B cell (primary cell): ENCODE measurements at regions of chr13 and their contacts with region 1.

Region 1: DNA sequence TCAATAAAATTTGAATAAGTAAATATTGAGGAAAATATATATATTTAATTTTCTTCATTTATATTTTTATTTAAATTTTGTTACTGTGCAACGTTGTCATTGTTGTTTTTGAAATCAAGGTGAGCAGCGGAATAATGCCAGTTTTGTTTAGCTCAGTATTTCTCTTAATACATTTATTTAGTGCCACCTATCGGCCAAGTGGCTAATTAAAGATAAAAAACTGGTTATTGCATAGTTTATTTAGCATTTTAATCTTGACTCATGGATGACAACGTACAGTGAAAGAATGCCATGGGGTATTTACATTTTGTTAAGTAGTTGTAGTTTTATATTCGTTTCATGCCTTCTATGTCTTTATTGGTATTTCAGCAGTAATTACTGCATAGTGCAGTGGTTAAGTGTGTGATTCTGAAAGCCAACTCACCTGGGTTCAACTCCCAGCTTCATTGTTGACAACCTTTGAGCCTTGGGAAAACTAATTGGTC is 265.9 kb downstream of the MYO16 start:
- DNase-seq: peak; percentile 23
- ATAC-seq: no peak
- H3K4me3 ChIP-seq: no peak overlapping the region
- H3K4me3 Mint-ChIP-seq: no peak overlapping the region
- H3K27ac ChIP-seq: no peak overlapping the region
- H3K27ac Mint-ChIP-seq: no peak overlapping the region
- H3K4me1 ChIP-seq: no peaks in the 10 kb centered on the region
- H3K4me1 Mint-ChIP-seq: peaks cover 2% of the 10 kb centered on the region
- H3K27me3 ChIP-seq: peaks cover 0 to 4% (median 0%) of the 10 kb centered on the region in 4 experiments
- H3K27me3 Mint-ChIP-seq: peaks cover 11% of the 10 kb centered on the region
- CTCF ChIP-seq: peak; percentile 79

Region 2: GRCh38 chr13:108176685-108177274 is 718.5 kb before region 1 on chr13:
- CTCF ChIA-PET with region 1: interaction called, 3 read pairs
- POLR2A ChIA-PET with region 1: no interaction called
- intact Hi-C with region 1: loop called (anchors 2 kb)
- DNase-seq: peak; percentile 79
- ATAC-seq: peak; percentile 41
- H3K4me3 ChIP-seq: no peak overlapping the region
- H3K4me3 Mint-ChIP-seq: no peak overlapping the region
- H3K27ac ChIP-seq: no peak overlapping the region
- H3K27ac Mint-ChIP-seq: no peak overlapping the region
- H3K4me1 ChIP-seq: no peaks in the 10 kb centered on the region
- H3K4me1 Mint-ChIP-seq: peaks cover 2% of the 10 kb centered on the region
- H3K27me3 ChIP-seq: no peaks in the 10 kb centered on the region
- H3K27me3 Mint-ChIP-seq: no peaks in the 10 kb centered on the region
- CTCF ChIP-seq: peak; percentile 83

Region 3: DNA sequence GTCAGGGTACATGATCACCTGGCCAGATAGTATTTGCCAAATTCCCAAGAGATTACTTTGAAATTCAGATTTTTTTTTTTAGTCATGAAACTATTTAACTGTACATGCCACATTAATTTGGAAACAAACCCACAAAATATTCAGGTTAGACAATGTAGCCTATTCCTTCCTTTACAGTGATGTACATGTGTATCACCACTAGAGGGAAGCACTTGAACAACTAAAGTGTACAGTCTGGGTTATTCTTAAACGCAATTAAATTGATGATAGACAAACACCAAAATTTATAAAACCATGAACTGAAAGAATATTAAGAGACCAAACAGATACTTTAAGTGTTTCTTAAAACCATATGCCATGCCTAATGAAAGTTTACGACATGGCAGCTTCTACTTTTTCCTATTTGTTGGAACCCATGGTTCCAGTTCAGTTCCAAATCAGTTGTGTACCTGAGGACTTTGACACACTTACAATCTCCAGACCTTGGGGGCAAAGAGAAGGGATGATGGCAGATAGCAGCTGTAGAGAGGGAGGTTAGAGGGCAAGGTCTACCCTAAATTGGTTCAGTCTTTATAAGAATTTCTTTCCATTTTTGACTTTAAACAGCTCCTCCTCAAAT is 572.9 kb before region 1 on chr13:
- CTCF ChIA-PET with region 1: interaction called, 7 read pairs
- POLR2A ChIA-PET with region 1: no interaction called
- intact Hi-C with region 1: loop called (anchors 2 kb)
- DNase-seq: peak; percentile 48
- ATAC-seq: peak; percentile 53
- H3K4me3 ChIP-seq: no peak overlapping the region
- H3K4me3 Mint-ChIP-seq: no peak overlapping the region
- H3K27ac ChIP-seq: no peak overlapping the region
- H3K27ac Mint-ChIP-seq: no peak overlapping the region
- H3K4me1 ChIP-seq: peaks cover 12 to 18% of the 10 kb centered on the region in 2 donors
- H3K4me1 Mint-ChIP-seq: peaks cover 18% of the 10 kb centered on the region
- H3K27me3 ChIP-seq: no peaks in the 10 kb centered on the region
- H3K27me3 Mint-ChIP-seq: peaks cover 4% of the 10 kb centered on the region
- CTCF ChIP-seq: peak; percentile 93

Region 4: DNA sequence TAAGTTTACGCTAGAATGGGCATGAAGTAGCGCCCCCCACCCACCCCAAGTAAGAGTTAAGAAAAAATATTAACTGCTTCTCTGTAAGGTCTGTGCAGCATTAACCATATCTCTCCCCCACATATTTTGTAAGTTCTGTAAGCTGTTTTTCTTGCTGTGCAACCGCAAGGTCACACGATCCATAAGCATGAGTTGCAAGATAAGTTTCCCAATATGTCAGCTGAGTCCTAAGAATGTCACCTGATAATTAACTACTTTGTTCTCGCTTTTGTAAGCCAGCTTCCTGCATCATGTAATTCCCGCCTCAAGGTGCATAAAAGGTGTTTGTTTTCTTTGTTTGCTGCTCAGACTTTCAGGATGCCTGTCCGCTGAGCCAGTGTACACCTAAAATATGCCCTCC is 78.9 kb before region 1 on chr13:
- CTCF ChIA-PET with region 1: no interaction called
- POLR2A ChIA-PET with region 1: no interaction called
- intact Hi-C with region 1: no loop called
- DNase-seq: no peak
- ATAC-seq: no peak
- H3K4me3 ChIP-seq: no peak overlapping the region
- H3K4me3 Mint-ChIP-seq: no peak overlapping the region
- H3K27ac ChIP-seq: no peak overlapping the region
- H3K27ac Mint-ChIP-seq: no peak overlapping the region
- H3K4me1 ChIP-seq: no peaks in the 10 kb centered on the region
- H3K4me1 Mint-ChIP-seq: no peaks in the 10 kb centered on the region
- H3K27me3 ChIP-seq: no peaks in the 10 kb centered on the region
- H3K27me3 Mint-ChIP-seq: no peaks in the 10 kb centered on the region
- CTCF ChIP-seq: no peak

Region 5: GRCh38 chr13:108915634-108916512 is 20.6 kb after region 1 on chr13:
- CTCF ChIA-PET with region 1: interaction called, 10 read pairs
- POLR2A ChIA-PET with region 1: no interaction called
- intact Hi-C with region 1: no loop called
- DNase-seq: peak; percentile 18
- ATAC-seq: peak; percentile 74
- H3K4me3 ChIP-seq: no peak overlapping the region
- H3K4me3 Mint-ChIP-seq: peak overlapping the region; percentile 78
- H3K27ac ChIP-seq: no peak overlapping the region
- H3K27ac Mint-ChIP-seq: peak overlapping the region; percentile 91
- H3K4me1 ChIP-seq: peaks cover 0 to 9% of the 10 kb centered on the region in 2 donors
- H3K4me1 Mint-ChIP-seq: peaks cover 16% of the 10 kb centered on the region
- H3K27me3 ChIP-seq: no peaks in the 10 kb centered on the region
- H3K27me3 Mint-ChIP-seq: peaks cover 9% of the 10 kb centered on the region
- CTCF ChIP-seq: no peak

Region 6: DNA sequence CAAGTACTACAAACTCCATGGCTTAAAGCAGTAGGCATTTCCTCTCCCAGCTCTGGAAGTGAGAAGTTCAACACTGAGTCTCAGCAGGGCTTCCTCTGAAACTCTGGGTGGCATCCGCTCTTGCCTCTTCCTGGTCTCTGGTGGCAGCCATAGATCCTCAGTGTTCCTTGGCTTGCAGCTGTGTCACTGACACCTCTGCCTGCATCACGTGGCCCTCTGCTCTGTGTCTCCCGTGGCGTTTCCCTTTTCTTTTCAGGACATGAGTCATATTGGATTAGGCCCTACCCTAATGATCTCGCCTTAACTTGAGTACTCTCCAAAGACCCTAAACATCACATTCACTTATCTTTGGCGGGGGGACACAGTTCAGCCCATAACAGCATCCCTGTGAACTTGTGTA is 200.8 kb after region 1 on chr13:
- CTCF ChIA-PET with region 1: no interaction called
- POLR2A ChIA-PET with region 1: no interaction called
- intact Hi-C with region 1: no loop called
- DNase-seq: no peak
- ATAC-seq: no peak
- H3K4me3 ChIP-seq: no peak overlapping the region
- H3K4me3 Mint-ChIP-seq: no peak overlapping the region
- H3K27ac ChIP-seq: no peak overlapping the region
- H3K27ac Mint-ChIP-seq: no peak overlapping the region
- H3K4me1 ChIP-seq: no peaks in the 10 kb centered on the region
- H3K4me1 Mint-ChIP-seq: no peaks in the 10 kb centered on the region
- H3K27me3 ChIP-seq: no peaks in the 10 kb centered on the region
- H3K27me3 Mint-ChIP-seq: peaks cover 4% of the 10 kb centered on the region
- CTCF ChIP-seq: no peak

Region 7: GRCh38 chr13:109113427-109113826 is 218.2 kb after region 1 on chr13:
- CTCF ChIA-PET with region 1: no interaction called
- POLR2A ChIA-PET with region 1: no interaction called
- intact Hi-C with region 1: no loop called
- DNase-seq: no peak
- ATAC-seq: no peak
- H3K4me3 ChIP-seq: no peak overlapping the region
- H3K4me3 Mint-ChIP-seq: no peak overlapping the region
- H3K27ac ChIP-seq: no peak overlapping the region
- H3K27ac Mint-ChIP-seq: no peak overlapping the region
- H3K4me1 ChIP-seq: no peaks in the 10 kb centered on the region
- H3K4me1 Mint-ChIP-seq: peaks cover 2% of the 10 kb centered on the region
- H3K27me3 ChIP-seq: peaks cover 0 to 5% (median 0%) of the 10 kb centered on the region in 4 experiments
- H3K27me3 Mint-ChIP-seq: peaks cover 12% of the 10 kb centered on the region
- CTCF ChIP-seq: no peak